ENCODE measurements at regions of chr11 and their contacts with region 1.

Region 1: DNA sequence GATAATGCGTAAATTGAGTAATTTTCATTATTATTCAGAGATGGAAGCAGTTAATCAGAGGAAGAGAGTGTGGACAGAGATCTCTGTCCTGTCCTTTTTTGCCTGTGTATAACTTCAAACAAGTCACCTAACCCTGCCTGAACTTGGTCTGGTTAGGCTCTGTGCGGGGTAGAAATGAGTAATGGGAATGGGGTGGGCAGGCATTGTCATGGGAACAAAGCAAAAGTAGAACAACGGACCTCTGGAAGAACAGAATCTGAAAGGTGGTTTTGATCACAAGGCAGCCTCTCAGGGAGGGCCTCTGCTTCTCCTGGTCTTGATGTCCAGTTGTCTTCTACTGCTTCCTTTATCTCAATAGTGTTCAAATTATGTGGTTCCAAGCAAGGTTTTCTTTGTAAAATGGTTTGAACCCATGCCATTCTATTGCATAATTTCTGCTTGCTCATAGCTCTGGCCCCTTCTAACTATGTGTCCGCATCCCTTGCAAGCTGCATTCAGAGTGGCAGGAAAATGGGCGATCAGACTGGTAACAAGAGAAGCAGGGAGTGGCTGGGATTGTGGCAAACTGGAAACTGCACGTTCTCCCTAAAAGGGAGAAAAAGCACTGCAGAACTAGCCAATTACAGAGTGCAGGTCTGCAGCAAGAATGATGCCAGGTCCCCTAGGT is 76.1 kb downstream of the PRR5L start:
- DNase-seq: no peak
- ATAC-seq: no peak
- H3K4me3 ChIP-seq: no peak overlapping the region
- H3K4me1 ChIP-seq: peaks cover 24% of the 10 kb centered on the region
- CTCF ChIP-seq: no peak

Region 2: DNA sequence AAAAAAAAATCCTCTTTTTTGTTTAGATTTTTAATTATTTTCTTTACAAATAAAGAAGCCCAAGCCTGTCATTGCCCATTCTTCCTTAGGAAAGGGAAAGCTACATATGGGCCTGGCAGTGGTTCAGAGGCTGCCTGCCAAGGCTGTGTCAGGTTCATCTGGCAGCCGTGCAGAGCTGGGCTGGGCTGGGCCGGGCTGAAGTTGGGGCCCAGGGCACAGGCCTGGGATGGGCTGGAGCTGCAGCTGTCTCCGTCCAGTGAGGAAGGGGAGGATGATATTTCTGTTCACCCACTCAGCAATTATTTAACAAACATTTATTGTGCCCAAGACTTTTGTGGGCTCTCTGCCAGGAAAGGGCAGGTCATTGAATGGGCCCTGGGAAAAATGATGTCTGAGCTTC is 71.6 kb before region 1 on chr11:
- intact Hi-C with region 1: loop called in 1 of 2 experiments (anchors 5 kb)
- DNase-seq: peak; percentile 86 to 90 (median 88)
- ATAC-seq: peak; percentile 84
- H3K4me3 ChIP-seq: no peak overlapping the region
- H3K4me1 ChIP-seq: peaks cover 29% of the 10 kb centered on the region
- CTCF ChIP-seq: no peak

Region 3: DNA sequence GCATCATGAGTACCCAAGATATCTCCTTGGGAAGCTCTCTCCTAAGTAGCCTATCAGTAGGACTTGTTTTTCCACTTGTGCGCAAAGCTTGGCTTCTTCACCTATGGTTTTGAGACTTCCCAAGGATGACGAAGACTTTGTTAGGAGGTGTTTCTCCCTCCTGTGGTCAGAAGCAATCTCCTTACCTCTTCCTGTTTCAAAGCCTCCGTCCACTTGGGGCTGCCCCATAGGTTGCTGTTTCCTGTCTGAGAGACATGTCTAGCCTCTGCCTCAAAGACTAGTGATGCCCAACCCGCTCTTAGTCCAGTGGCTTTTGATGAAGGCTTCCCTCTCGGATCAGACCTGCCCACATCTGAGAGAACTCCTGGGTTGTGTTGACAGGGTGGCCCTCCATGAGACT is 44.9 kb after region 1 on chr11:
- intact Hi-C with region 1: no loop called
- DNase-seq: no peak
- ATAC-seq: peak; percentile 34
- H3K4me3 ChIP-seq: no peak overlapping the region
- H3K4me1 ChIP-seq: peaks cover 5% of the 10 kb centered on the region
- CTCF ChIP-seq: no peak